Colonic mucosa (tissue), 4 donors: ENCODE measurements at regions of chr7 and their contacts with region 1.

Region 1: GRCh38 chr7:106112117-106112971 is at the start of gene SYPL1:
- DNase-seq: peak; percentile 91
- H3K4me3 ChIP-seq: peak within 1 kb of the TSS; percentile 65
- H3K27ac ChIP-seq: peak within 1 kb of the TSS; percentile 98
- H3K4me1 ChIP-seq: peaks cover 15% of the 10 kb centered on the region
- H3K27me3 ChIP-seq: no peaks in the 10 kb centered on the region
- CTCF ChIP-seq: no peak
- total RNA-seq, gene SYPL1: 89.0 to 94.0 TPM

Region 2: GRCh38 chr7:106071356-106071998 is 40.9 kb before region 1 on chr7:
- intact Hi-C with region 1: loop called (anchors 5 kb)
- DNase-seq: peak; percentile 85
- H3K4me3 ChIP-seq: no peak overlapping the region
- H3K27ac ChIP-seq: peak overlapping the region; percentile 91
- H3K4me1 ChIP-seq: peaks cover 16% of the 10 kb centered on the region
- H3K27me3 ChIP-seq: no peaks in the 10 kb centered on the region
- CTCF ChIP-seq: no peak